HCT116 (cell line): ENCODE measurements at regions of chr6 and their contacts with region 1.

Region 1: DNA sequence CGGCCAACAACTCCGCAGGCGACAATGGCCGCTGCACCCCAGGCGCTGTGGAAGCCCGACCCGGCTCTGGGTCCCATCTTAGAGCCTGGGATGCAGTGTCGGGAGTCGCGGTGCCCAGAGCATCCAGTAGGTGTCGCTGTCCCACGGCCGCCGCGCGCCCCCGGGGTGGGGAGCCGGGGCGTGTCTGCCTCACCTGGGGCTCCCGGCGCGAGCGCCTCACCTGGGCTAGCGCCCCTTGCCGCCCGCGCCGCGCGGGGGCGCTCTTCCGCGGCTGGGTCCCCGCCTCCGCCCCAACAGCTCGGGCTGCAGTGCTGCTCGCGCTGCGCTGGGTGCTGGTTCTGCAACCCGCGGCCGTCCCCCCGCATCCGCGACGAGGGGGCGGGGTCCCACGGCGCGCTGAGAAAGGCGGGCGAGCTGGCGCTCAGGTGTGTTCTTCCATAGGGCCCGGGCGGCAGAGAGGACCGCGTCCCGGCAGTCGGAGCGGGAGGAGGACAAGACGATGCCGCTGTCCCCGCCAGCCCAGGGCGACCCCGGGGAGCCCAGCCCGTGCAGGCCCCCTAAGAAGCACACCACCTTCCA is at the start of gene CRYBG1:
- DNase-seq: peak; percentile 75
- ATAC-seq: peak; percentile 91
- H3K4me3 ChIP-seq: peak within 1 kb of the TSS; percentile 74 to 88
- H3K27ac ChIP-seq: peak within 1 kb of the TSS; percentile 64
- H3K4me1 ChIP-seq: peaks cover 5 to 17% of the 10 kb centered on the region in 2 experiments; a peak in 3 of 4 replicates
- H3K27me3 ChIP-seq: no peaks in the 10 kb centered on the region
- CTCF ChIP-seq: peak; percentile 89 to 90 (median 90)
- POLR2A ChIP-seq: no peak
- RAD21 ChIP-seq: peak; percentile 86
- total RNA-seq, gene CRYBG1: 10.7 TPM

Region 2: DNA sequence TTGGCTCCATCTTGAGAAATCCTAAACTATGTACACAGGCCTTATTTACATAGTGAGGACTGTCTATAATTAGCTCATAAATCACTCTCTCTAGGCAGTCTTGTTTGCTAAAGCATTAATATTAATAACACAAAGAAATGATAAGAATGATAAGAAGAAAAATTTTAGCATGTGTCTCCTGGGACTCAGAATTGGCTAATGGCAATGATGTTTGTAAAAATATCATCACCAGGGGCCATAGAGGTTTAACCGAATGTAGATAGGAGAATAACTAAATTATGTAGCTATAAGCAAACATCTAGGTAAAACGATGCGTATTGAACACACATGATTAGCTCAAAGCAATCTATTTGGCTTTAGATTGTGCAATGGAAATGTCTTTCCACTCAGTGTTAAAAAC is 13.2 kb before region 1 on chr6:
- CTCF ChIA-PET with region 1: interaction called, 11 read pairs
- POLR2A ChIA-PET with region 1: no interaction called
- RAD21 ChIA-PET with region 1: no interaction called
- intact Hi-C with region 1: no loop called
- DNase-seq: no peak
- ATAC-seq: no peak
- H3K4me3 ChIP-seq: no peak overlapping the region
- H3K27ac ChIP-seq: no peak overlapping the region
- H3K4me1 ChIP-seq: peaks cover 0 to 7% of the 10 kb centered on the region in 2 experiments; a peak in 2 of 4 replicates
- H3K27me3 ChIP-seq: no peaks in the 10 kb centered on the region
- CTCF ChIP-seq: no peak
- POLR2A ChIP-seq: no peak
- RAD21 ChIP-seq: no peak

Region 3: GRCh38 chr6:106372838-106373501 is 12.5 kb after region 1 on chr6:
- CTCF ChIA-PET with region 1: interaction called, 52 read pairs
- POLR2A ChIA-PET with region 1: interaction called, 5 read pairs
- RAD21 ChIA-PET with region 1: no interaction called
- intact Hi-C with region 1: no loop called
- DNase-seq: peak; percentile 79
- ATAC-seq: peak; percentile 71
- H3K4me3 ChIP-seq: peak overlapping the region in 1 of 2 experiments; percentile 35; a peak in 2 of 4 replicates
- H3K27ac ChIP-seq: no peak overlapping the region
- H3K4me1 ChIP-seq: peaks cover 10 to 59% of the 10 kb centered on the region in 2 experiments
- H3K27me3 ChIP-seq: no peaks in the 10 kb centered on the region
- CTCF ChIP-seq: no peak
- POLR2A ChIP-seq: no peak
- RAD21 ChIP-seq: peak; percentile 17; the same call in 1 of the 2 replicates

Region 4: GRCh38 chr6:106913676-106914280 is 553.3 kb after region 1 on chr6:
- CTCF ChIA-PET with region 1: no interaction called
- POLR2A ChIA-PET with region 1: no interaction called
- RAD21 ChIA-PET with region 1: no interaction called
- intact Hi-C with region 1: no loop called
- DNase-seq: no peak
- ATAC-seq: no peak
- H3K4me3 ChIP-seq: no peak overlapping the region
- H3K27ac ChIP-seq: no peak overlapping the region
- H3K4me1 ChIP-seq: peaks cover 0 to 6% of the 10 kb centered on the region in 2 experiments; a peak in 2 of 4 replicates
- H3K27me3 ChIP-seq: no peaks in the 10 kb centered on the region
- CTCF ChIP-seq: no peak
- POLR2A ChIP-seq: no peak
- RAD21 ChIP-seq: no peak

Region 5: DNA sequence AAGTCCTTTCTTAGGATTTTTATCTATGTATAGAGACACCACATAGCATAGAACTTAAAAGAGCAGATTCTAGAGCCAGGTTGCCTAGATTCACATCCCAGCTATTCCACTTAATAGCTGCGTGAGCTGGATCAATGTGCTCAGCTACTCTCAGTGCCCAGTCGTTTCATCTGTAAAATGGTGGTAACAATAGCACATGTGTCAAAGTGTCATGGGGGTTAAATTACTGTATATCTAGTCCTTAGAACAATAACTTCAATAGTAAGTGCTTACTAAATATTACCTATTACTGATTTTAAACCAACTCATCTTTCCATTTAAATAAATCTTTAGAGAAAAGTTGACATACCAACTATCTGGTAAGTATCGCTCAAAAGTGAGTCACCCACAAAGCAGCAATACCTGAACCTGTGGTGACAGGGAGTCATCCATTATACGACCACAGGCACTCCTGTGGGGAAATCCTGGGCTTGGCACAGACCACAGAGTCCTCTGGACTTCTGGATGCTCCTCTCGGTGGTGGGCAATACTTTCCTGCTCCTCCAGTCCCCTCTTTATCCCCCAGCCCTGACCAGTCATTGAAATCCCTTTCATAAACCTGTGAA is 944.0 kb after region 1 on chr6:
- CTCF ChIA-PET with region 1: no interaction called
- POLR2A ChIA-PET with region 1: no interaction called
- RAD21 ChIA-PET with region 1: no interaction called
- intact Hi-C with region 1: no loop called
- DNase-seq: peak; percentile 48
- ATAC-seq: peak; percentile 89
- H3K4me3 ChIP-seq: no peak overlapping the region
- H3K27ac ChIP-seq: no peak overlapping the region
- H3K4me1 ChIP-seq: peaks cover 6 to 12% of the 10 kb centered on the region in 2 experiments; a peak in 3 of 4 replicates
- H3K27me3 ChIP-seq: no peaks in the 10 kb centered on the region
- CTCF ChIP-seq: no peak
- POLR2A ChIP-seq: no peak
- RAD21 ChIP-seq: no peak